Mammary epithelial cell (primary cell): ENCODE measurements at regions of chrX and their contacts with region 1.

Region 1: GRCh38 chrX:37060999-37061398 is 52.8 kb downstream of the FAM47C start:
- DNase-seq: peak; percentile 46
- H3K4me3 ChIP-seq: no peak overlapping the region
- H3K27ac ChIP-seq: no peak overlapping the region
- H3K4me1 ChIP-seq: no peaks in the 10 kb centered on the region
- H3K27me3 ChIP-seq: peaks cover 2% of the 10 kb centered on the region
- CTCF ChIP-seq: peak; percentile 52 to 71

Region 2: DNA sequence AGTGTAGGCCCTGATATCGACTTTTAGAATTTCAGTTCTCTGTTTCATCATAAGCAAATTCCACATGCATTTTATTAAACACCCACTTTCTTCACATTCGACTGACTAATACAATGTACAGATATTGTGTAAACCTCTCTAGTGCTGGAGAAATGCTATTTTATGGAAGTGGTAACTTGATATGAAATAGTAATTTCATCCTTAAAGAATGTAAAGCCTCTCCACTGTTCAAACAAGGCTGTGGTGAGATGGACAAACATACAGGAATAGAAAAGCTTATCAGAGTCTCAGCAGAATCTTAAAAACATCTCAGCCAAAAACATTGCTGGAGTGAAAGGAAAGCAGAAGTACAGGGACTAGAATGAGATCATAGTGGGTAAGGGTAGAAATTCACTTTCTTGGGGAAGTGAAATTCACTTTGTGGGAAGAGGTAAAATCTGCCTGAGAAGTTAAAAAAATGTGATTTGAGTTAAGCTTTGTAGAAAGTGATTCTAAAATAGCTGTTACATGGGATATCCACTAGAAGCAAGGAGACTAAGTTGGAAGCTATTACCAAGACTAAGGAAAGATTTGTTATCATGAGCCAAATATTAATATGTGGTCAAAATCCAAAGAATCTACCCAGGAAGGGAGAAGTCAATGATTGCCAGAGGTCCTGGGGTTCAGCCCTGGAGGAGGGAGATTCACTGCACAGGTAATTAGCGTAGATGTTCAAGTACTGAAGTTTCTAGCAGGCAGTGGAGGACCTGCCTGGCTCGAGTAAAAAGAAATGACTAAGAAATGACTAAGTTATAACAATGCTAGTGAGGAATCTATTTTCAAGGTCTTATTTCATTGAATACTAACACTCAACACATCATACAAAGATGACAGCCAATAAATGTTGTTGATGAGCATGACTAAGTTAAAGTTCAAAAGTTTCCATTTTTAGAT is 451.1 kb before region 1 on chrX:
- CTCF ChIA-PET with region 1: no interaction called
- dilution Hi-C with region 1: no loop called
- in situ Hi-C with region 1: no loop called
- intact Hi-C with region 1: no loop called
- DNase-seq: no peak
- H3K4me3 ChIP-seq: no peak overlapping the region
- H3K27ac ChIP-seq: no peak overlapping the region
- H3K4me1 ChIP-seq: no peaks in the 10 kb centered on the region
- H3K27me3 ChIP-seq: no peaks in the 10 kb centered on the region
- CTCF ChIP-seq: no peak

Region 3: DNA sequence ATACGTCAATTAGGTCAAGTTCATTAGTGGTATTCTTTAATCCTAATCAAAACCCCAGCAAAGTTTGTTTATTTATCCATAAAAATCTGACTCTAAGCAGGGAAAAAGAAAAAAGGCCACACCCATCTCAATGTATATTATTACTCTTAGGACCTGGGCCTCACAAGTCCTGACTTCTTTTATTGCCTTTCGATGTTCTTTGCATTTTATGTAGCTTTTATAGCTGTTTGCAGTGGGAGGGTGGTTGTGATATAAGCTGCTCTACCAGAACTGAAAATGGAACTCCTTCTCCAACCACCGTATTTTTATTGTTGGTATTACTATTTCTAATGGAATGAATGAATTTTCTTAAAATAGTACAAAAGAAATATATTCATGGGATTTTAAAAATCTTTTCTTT is 216.1 kb before region 1 on chrX:
- CTCF ChIA-PET with region 1: no interaction called
- dilution Hi-C with region 1: no loop called
- in situ Hi-C with region 1: no loop called
- intact Hi-C with region 1: no loop called
- DNase-seq: no peak
- H3K4me3 ChIP-seq: no peak overlapping the region
- H3K27ac ChIP-seq: no peak overlapping the region
- H3K4me1 ChIP-seq: no peaks in the 10 kb centered on the region
- H3K27me3 ChIP-seq: peaks cover 2% of the 10 kb centered on the region
- CTCF ChIP-seq: no peak

Region 4: DNA sequence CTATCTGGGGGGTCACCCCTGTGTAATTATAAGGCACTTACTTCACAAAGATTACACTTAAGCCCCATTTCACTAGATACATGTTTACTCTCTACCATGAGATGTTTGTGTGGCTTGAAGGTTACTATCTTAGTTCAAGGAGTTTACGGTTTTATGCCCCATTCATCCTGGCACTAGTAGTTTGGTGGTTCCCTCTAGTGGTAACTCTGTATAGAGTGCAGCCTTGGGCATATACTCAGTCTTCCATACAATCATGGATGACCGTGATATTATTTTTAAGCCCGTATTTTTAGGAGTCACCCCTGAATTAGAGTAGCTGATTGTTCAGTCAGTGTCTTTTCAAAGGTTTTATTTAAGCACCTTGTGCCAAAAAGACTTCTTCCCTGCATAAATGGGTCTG is 162.7 kb before region 1 on chrX:
- CTCF ChIA-PET with region 1: no interaction called
- dilution Hi-C with region 1: no loop called
- in situ Hi-C with region 1: no loop called
- intact Hi-C with region 1: no loop called
- DNase-seq: peak; percentile 2
- H3K4me3 ChIP-seq: no peak overlapping the region
- H3K27ac ChIP-seq: no peak overlapping the region
- H3K4me1 ChIP-seq: no peaks in the 10 kb centered on the region
- H3K27me3 ChIP-seq: peaks cover 2% of the 10 kb centered on the region
- CTCF ChIP-seq: peak; percentile 70 to 71

Region 5: GRCh38 chrX:36908801-36909676 is 152.0 kb before region 1 on chrX:
- CTCF ChIA-PET with region 1: no interaction called
- dilution Hi-C with region 1: no loop called
- in situ Hi-C with region 1: no loop called
- intact Hi-C with region 1: loop called (anchors 5 kb)
- DNase-seq: peak; percentile 32
- H3K4me3 ChIP-seq: no peak overlapping the region
- H3K27ac ChIP-seq: no peak overlapping the region
- H3K4me1 ChIP-seq: no peaks in the 10 kb centered on the region
- H3K27me3 ChIP-seq: no peaks in the 10 kb centered on the region
- CTCF ChIP-seq: peak; percentile 56 to 60

Region 6: GRCh38 chrX:36947214-36947613 is 113.8 kb before region 1 on chrX:
- CTCF ChIA-PET with region 1: no interaction called
- dilution Hi-C with region 1: no loop called
- in situ Hi-C with region 1: no loop called
- intact Hi-C with region 1: no loop called
- DNase-seq: no peak
- H3K4me3 ChIP-seq: no peak overlapping the region
- H3K27ac ChIP-seq: no peak overlapping the region
- H3K4me1 ChIP-seq: no peaks in the 10 kb centered on the region
- H3K27me3 ChIP-seq: peaks cover 10% of the 10 kb centered on the region
- CTCF ChIP-seq: no peak